Astrocyte of the cerebellum (primary cell): ENCODE measurements at regions of chr3 and their contacts with region 1.

Region 1: DNA sequence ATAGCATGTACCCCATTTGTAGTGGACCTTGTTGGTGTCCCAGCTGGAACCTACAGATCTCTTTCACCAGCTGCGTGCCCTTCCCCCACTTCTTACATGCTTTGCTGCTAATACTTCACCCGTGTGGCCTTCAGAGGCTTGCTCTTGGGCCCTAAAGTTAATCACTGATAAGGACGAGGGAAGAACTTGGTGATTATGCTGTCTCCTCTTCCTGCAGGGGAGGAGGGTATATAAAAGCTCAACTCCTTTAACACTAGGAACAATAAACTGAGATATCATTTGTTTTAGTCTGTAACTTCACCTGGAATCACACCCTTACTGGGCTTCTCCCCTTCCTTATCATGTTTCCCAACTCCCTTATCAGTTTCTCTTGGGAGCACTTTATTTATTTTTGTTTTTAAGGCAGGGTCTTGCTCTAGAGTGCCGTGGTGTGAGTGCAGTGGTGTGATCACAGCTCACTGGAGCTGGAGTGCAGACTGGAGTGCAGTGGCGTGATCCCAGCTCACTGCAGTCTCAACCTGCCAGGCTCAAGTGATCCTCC is 43.2 kb upstream of the PIK3R4 start:
- DNase-seq: no peak
- H3K4me3 ChIP-seq: no peak overlapping the region
- CTCF ChIP-seq: no peak

Region 2: DNA sequence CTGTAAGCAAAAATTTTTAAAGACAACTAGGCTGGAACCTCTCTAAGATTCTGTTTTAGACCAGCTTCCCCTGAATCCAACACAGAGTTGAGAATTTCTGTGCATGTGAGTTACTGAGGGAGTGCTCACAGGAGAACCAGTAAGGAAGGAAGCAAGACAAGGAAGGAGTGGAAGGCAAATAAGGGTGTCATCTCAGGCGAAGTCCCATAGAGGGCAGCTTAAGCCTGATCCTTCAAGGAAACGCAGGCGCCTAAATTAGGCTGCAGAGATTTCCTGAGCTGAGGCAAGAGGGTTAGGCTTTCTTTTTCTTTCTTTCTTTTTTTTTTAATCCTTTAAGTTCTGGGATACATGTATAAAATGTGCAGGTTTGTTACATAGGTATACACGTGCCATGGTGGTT is 309.1 kb before region 1 on chr3:
- in situ Hi-C with region 1: no loop called
- DNase-seq: peak; percentile 55
- H3K4me3 ChIP-seq: no peak overlapping the region
- CTCF ChIP-seq: peak; percentile 67

Region 3: DNA sequence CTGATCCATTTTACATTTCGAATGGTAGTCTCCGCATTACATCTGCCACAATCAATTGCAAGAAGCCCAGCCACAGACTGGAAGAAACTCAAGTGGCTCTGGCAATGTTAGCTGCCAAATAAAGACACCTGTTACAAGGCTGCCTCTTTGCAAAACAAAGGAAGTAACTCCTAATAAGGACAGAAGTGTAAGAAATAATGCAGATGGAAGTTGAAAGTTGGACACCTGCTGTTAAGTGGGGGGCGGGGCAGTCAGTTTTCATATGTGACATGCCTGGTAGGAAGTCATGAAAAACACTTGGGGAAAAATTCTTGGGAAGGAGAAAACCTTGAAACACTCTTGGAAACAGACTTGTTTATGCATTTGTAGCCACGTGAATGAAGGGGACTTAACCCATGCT is 50.0 kb after region 1 on chr3:
- in situ Hi-C with region 1: no loop called
- DNase-seq: no peak
- H3K4me3 ChIP-seq: no peak overlapping the region
- CTCF ChIP-seq: no peak

Region 4: GRCh38 chr3:130870423-130870822 is 80.6 kb after region 1 on chr3:
- in situ Hi-C with region 1: loop called (anchors 5 kb)
- DNase-seq: no peak
- H3K4me3 ChIP-seq: no peak overlapping the region
- CTCF ChIP-seq: no peak

Region 5: DNA sequence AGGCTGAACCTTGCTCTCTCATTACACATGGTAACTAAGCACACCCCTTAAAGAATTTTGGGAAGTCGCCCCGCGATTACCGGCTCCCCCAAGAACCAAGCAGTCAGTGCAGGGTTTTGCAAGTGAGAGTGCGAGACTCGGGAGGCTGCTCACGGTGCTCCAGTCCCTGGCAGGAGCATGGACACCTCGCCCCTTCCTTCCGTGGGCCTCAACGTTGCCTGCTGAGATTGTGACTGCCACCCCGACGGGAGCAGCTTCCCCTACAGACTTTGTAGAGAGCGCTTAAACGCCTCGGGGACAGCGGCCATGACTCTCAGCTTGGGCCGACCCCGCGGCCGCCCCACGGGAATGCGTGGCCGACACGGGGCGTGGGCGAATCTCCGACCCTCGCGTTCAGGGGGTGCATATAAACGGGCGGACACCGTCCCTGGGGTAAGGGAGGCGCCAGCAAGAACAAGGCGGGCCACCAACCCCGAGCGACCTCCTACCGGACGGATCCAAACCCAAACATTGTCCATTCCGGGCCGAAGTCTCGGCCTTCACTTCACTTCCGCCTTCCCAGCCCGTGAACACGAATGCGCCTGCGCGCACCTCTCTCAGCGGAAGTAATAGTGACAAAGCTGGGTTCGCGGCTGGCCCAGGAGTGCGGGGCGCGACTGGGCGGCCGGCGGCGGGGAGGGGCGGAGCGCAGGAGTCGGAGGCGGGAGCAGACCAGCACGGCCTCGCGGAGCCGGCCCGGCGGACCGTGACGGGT is 103.7 kb after region 1 on chr3 and contains the start of gene ATP2C1:
- in situ Hi-C with region 1: no loop called
- DNase-seq: peak; percentile 85
- H3K4me3 ChIP-seq: peak within 1 kb of the TSS; percentile 82
- CTCF ChIP-seq: no peak